Head of caudate nucleus (tissue), 42 donors: ENCODE measurements at regions of chr17 and their contacts with region 1.

Region 1: DNA sequence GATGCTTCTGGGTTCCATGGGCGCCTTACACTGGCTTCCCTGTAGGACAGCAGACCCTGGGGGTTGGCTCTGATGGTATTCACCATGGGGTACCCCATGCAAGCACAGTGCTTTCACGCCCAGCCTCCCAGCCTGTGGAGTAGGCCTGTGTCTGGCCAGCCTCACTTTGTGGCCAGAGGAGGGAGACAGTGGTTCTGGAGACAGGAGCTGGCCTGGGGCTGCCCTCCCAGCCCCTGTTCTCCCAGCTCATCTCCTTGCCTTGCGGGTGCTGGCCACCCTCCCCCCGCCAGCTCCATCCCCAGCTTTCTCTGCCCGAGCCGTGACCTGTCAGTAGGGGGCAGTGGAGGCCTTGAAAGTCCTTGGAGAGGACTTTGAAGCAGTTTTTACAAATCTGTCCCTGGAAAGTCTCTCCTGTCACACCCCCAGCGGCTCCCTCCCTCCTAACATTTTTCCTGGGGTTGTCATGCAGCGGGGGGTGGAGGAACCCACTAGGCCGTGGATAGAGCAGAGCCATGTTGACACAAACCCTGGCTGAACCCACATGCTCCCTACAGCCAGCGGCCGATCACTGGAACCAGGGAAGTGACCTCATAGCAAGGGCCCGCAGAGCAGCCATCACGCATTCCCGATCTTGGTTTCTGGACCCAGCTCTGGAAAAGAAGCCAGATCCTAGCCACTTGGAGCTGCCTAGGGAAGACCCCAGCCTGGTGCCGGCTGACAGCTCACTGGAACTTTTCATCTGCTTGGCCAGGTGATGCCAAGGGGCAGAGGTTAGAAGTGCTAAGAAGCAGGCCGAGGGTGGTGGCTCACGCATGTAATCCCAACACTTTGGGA is 289.4 kb downstream of the SEC14L1 start:
- DNase-seq: peak in 41 of 42 donors; percentile 65 to 92 (median 83)

Region 2: GRCh38 chr17:77331301-77331864 is 98.8 kb before region 1 on chr17:
- intact Hi-C with region 1: loop called (anchors 5 kb)
- DNase-seq: peak; percentile 80 to 97 (median 92)

Region 3: GRCh38 chr17:77494664-77495435 is 64.7 kb after region 1 on chr17:
- intact Hi-C with region 1: loop called (anchors 2 kb)
- DNase-seq: peak; percentile 50 to 92 (median 82)